ENCODE measurements at regions of chr19 and their contacts with region 1.

Region 1: DNA sequence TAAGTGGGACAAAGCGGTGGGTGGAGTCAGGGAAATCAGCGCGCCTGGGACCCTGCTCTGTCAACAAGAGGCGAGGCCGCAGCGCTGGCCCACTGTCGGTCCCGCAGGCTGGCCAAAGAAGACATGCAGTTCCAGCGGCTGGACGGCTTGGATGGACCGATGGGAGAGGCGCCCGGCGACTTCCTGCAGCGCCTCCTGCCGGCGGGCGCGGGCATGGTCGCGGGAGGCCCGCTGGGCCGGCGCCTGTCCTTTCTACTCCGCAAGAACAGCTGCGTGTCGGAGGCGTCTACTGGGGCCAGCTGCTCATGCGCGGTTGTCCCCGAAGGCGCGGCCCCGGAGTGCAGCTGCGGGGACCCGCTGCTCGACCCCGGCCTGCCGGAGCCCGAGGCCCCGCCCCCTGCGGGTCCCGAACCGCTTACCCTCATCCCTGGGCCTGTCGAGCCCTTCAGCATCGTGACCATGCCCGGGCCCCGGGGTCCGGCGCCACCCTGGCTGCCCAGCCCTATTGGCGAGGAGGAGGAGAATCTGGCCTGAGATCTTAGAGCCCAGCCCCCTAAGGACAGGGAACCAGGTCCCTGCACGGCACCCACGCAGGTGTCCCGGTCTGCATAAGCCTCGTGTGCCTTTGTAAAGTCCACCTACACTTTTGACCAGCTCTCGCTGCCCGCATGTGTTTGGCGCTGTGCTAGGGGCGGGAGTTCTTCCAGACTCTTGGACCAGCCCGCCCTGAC is 6.1 kb downstream of the BEST2 start:
- DNase-seq: peak; percentile 78
- H3K4me3 Mint-ChIP-seq: peak overlapping the region; percentile 48
- H3K27ac Mint-ChIP-seq: no peak overlapping the region
- H3K4me1 Mint-ChIP-seq: peaks cover 4% of the 10 kb centered on the region
- H3K27me3 Mint-ChIP-seq: peaks cover 11% of the 10 kb centered on the region

Region 2: DNA sequence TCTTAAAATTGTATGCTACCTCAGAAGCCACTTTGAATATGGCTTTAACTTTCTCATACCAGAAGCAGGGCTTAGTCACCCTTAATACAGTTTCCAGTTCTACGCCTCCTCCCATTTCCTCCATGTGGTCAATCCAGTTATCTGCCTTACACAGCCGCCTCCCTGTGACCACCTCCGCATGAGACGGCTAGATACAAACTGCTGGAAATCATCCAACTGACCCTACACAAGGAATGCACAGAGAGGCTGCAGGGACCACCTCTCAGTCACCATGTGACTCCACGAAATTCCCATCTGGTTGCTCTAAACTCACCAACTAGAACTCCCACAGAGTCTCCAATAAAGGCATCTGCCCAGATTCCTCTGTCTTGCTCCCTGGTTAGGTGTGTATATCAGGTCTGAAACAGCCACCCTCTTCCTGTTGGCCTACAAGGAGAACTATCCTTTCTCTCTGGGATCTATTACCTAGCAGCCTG is 213.3 kb before region 1 on chr19:
- CTCF ChIA-PET with region 1: no interaction called
- POLR2A ChIA-PET with region 1: no interaction called
- intact Hi-C with region 1: no loop called
- DNase-seq: no peak
- H3K4me3 Mint-ChIP-seq: no peak overlapping the region
- H3K27ac Mint-ChIP-seq: peak overlapping the region; percentile 73
- H3K4me1 Mint-ChIP-seq: peaks cover 47% of the 10 kb centered on the region
- H3K27me3 Mint-ChIP-seq: no peaks in the 10 kb centered on the region

Region 3: GRCh38 chr19:12696366-12697335 is 61.1 kb before region 1 on chr19 and contains the start of gene FBXW9:
- CTCF ChIA-PET with region 1: interaction called, 11 read pairs
- POLR2A ChIA-PET with region 1: no interaction called
- intact Hi-C with region 1: no loop called
- DNase-seq: peak; percentile 98
- H3K4me3 Mint-ChIP-seq: peak within 1 kb of the TSS; percentile 84
- H3K27ac Mint-ChIP-seq: peak within 1 kb of the TSS; percentile 87
- H3K4me1 Mint-ChIP-seq: peaks cover 14% of the 10 kb centered on the region
- H3K27me3 Mint-ChIP-seq: no peaks in the 10 kb centered on the region
- total RNA-seq, gene FBXW9: 6.6 to 7.0 TPM

Region 4: DNA sequence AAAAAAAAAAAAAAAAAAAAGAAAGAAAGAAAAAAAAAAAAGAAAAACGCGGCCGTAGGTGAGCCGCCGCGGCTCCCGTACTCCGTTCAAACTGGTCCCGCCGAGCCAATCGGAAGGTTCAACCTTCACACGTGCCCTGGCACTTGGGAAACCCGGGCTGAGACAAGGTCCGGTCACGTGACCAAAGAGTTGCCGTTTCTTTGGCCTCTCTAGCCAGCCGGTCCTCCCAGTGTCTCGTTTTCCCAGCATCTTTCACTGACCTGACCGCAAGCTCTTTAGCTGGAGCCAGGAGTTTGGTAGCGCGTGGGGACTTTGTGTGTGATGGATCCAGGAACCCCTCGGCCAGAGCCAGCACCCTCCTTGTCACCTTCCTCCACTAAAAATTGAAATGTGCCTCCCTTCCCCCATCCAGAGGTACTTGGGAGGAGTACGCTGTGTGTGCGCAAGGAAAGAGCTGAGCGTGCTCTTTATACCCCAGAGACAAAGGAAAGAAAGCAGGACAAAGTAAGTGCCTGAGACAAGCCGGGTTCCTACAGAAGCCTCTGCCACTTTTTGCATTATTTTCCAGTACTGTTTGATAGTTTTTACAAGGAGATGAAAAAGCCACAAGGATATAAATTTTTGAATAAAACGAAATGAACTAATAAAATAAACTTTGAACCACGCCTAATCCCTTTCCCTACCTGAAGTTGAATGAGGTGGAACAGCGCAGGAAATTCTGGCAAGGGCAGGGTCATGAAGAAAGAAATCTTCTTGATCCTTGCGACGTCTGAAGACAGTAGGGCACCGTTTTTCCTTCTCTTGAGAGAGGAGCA is 34.9 kb before region 1 on chr19:
- CTCF ChIA-PET with region 1: interaction called, 60 read pairs
- POLR2A ChIA-PET with region 1: interaction called, 5 read pairs
- intact Hi-C with region 1: loop called (anchors 1 kb)
- DNase-seq: peak; percentile 96
- H3K4me3 Mint-ChIP-seq: peak overlapping the region; percentile 92
- H3K27ac Mint-ChIP-seq: peak overlapping the region; percentile 95
- H3K4me1 Mint-ChIP-seq: peaks cover 28% of the 10 kb centered on the region
- H3K27me3 Mint-ChIP-seq: no peaks in the 10 kb centered on the region

Region 5: GRCh38 chr19:12745166-12745897 is 12.4 kb before region 1 on chr19:
- CTCF ChIA-PET with region 1: interaction called, 116 read pairs
- POLR2A ChIA-PET with region 1: no interaction called
- intact Hi-C with region 1: no loop called
- DNase-seq: no peak
- H3K4me3 Mint-ChIP-seq: no peak overlapping the region
- H3K27ac Mint-ChIP-seq: no peak overlapping the region
- H3K4me1 Mint-ChIP-seq: peaks cover 4% of the 10 kb centered on the region
- H3K27me3 Mint-ChIP-seq: no peaks in the 10 kb centered on the region

Region 6: DNA sequence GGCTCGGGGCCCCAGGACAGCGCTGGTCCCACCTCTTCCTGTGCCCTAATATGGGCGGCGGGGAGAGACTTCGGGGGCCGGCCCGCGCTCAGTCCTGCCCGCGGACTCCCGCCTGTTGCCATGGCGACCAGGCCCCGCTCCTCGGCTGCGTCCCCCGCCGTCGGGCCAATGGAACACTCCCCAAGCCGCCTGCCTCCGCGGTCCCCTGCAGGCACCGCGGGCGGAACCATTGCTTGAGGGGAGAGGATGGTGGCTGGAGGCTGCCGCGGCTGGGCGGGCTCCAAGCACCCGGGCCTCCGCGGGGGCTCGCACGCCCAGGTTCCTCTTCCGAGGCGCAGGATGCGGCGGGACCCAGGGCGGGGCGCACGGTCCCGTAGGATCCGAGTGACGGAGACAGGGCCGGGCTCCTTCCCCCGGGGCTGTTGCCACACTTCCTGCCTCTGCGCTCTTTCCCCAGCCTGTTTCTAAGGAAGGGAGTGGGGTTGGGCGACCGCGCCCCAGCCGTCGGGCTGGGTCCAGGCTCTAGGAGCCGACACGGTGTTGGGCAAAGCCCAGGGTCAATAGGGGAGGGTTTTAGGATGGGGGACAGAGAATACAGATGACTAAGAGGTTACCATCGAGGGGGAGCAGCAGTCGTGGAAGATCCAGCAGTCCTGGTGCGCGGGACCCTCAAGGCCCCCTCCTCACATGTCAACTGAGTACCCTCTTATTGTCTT is 32.4 kb after region 1 on chr19:
- CTCF ChIA-PET with region 1: interaction called, 636 read pairs
- POLR2A ChIA-PET with region 1: no interaction called
- intact Hi-C with region 1: no loop called
- DNase-seq: peak; percentile 98
- H3K4me3 Mint-ChIP-seq: peak overlapping the region; percentile 94
- H3K27ac Mint-ChIP-seq: peak overlapping the region; percentile 99
- H3K4me1 Mint-ChIP-seq: peaks cover 20% of the 10 kb centered on the region
- H3K27me3 Mint-ChIP-seq: no peaks in the 10 kb centered on the region

Region 7: GRCh38 chr19:12825254-12826131 is 67.8 kb after region 1 on chr19:
- CTCF ChIA-PET with region 1: interaction called, 14 read pairs
- POLR2A ChIA-PET with region 1: no interaction called
- intact Hi-C with region 1: no loop called
- DNase-seq: peak; percentile 47
- H3K4me3 Mint-ChIP-seq: no peak overlapping the region
- H3K27ac Mint-ChIP-seq: no peak overlapping the region
- H3K4me1 Mint-ChIP-seq: peaks cover 9% of the 10 kb centered on the region
- H3K27me3 Mint-ChIP-seq: peaks cover 43% of the 10 kb centered on the region